ENCODE measurements at regions of chr7 and their contacts with region 1.

Region 1: DNA sequence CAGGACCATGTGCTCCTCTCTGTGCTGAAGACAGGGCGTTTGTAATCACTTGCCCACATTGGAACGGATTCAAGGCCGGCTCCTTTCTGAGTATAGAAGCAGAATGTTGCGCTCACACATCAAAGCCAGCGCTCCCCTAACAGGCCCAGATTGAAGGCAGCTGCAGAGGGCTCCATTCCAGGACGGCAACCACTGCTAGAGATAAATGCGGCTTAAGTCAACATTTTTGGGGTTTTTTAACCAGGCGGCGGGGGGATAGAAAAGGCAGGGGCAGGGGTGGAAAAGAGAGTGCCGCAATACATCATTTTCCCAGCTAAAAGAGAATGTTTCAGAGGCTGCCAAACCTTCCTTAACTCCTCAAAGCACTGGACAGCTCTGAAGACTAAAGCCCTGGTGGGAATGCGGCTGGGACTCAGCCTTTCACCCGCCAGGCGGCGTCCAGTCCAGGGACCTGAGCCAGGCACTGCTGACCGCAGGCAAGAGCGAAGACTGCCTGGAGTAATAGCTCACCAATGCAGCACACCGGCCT is 189.6 kb downstream of the TNS3 start:
- DNase-seq: peak; percentile 76 to 84
- ATAC-seq: peak; percentile 80 to 92 (median 89)
- H3K4me3 ChIP-seq: no peak overlapping the region
- H3K27ac ChIP-seq: no peak overlapping the region
- H3K4me1 ChIP-seq: peaks cover 6% of the 10 kb centered on the region
- H3K27me3 ChIP-seq: no peaks in the 10 kb centered on the region
- CTCF ChIP-seq: peak; percentile 52

Region 2: DNA sequence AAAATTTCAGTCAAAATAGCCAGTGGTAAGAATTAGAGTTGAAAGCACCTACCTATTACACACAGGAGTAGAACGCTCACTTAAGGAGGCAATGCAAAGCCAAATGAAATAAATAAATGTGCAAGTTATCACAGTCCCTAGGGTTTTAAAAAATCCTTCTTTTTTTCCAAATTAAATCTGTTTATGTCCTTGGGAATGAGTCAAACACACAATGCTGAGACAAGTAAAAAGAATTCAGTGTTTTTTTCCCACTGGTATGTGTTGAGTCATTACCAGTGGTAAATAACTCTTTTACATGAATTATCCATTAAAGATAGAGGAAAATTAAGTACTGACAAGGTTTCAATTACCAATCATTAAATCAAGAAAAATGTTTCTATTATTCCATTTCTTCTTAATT is 249.0 kb before region 1 on chr7:
- intact Hi-C with region 1: no loop called
- DNase-seq: no peak
- ATAC-seq: no peak
- H3K4me3 ChIP-seq: no peak overlapping the region
- H3K27ac ChIP-seq: no peak overlapping the region
- H3K4me1 ChIP-seq: no peaks in the 10 kb centered on the region
- H3K27me3 ChIP-seq: no peaks in the 10 kb centered on the region
- CTCF ChIP-seq: no peak

Region 3: GRCh38 chr7:47273974-47274766 is 118.1 kb before region 1 on chr7:
- intact Hi-C with region 1: loop called in 1 of 2 experiments (anchors 10 kb)
- DNase-seq: no peak
- ATAC-seq: peak in 2 of 4 donors; percentile 17 to 23
- H3K4me3 ChIP-seq: no peak overlapping the region
- H3K27ac ChIP-seq: no peak overlapping the region
- H3K4me1 ChIP-seq: no peaks in the 10 kb centered on the region
- H3K27me3 ChIP-seq: no peaks in the 10 kb centered on the region
- CTCF ChIP-seq: no peak

Region 4: GRCh38 chr7:47571331-47572093 is 179.2 kb after region 1 on chr7:
- intact Hi-C with region 1: no loop called
- DNase-seq: peak; percentile 84 to 86
- ATAC-seq: peak; percentile 71 to 76 (median 72)
- H3K4me3 ChIP-seq: peak overlapping the region; percentile 33
- H3K27ac ChIP-seq: peak overlapping the region; percentile 58
- H3K4me1 ChIP-seq: peaks cover 30% of the 10 kb centered on the region
- H3K27me3 ChIP-seq: peaks cover 0 to 2% (median 0%) of the 10 kb centered on the region in 3 donors
- CTCF ChIP-seq: no peak